ENCODE measurements at regions of chr20 and their contacts with region 1.

Region 1: GRCh38 chr20:34312544-34313217 is 9.5 kb upstream of the AHCY start:
- DNase-seq: peak; percentile 93
- ATAC-seq: peak; percentile 100
- H3K4me3 Mint-ChIP-seq: peak overlapping the region; percentile 22
- H3K27ac Mint-ChIP-seq: no peak overlapping the region
- H3K4me1 Mint-ChIP-seq: peaks cover 21% of the 10 kb centered on the region
- H3K27me3 Mint-ChIP-seq: peaks cover 24% of the 10 kb centered on the region

Region 2: GRCh38 chr20:34089655-34090345 is 222.9 kb before region 1 on chr20:
- CTCF ChIA-PET with region 1: no interaction called
- POLR2A ChIA-PET with region 1: no interaction called
- DNase-seq: no peak
- ATAC-seq: no peak
- H3K4me3 Mint-ChIP-seq: no peak overlapping the region
- H3K27ac Mint-ChIP-seq: peak overlapping the region; percentile 43
- H3K4me1 Mint-ChIP-seq: peaks cover 1% of the 10 kb centered on the region
- H3K27me3 Mint-ChIP-seq: no peaks in the 10 kb centered on the region

Region 3: DNA sequence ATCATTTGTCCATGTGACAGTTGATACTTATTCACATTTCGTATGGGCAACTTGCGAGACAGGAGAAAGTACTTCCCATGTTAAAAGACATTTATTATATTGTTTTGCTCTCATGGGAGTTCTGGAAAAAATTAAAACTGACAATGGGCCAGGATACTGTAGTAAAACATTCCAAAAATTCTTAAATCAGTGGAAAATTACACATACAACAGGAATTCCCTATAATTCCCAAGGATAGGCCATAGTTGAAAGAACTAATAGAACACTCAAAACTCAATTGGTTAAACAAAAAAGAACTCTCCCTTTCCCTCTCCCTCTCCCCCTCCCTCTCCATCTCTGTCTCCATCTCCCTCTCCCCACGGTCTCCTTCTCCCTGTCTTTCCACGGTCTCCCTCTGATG is 181.2 kb before region 1 on chr20:
- CTCF ChIA-PET with region 1: no interaction called
- POLR2A ChIA-PET with region 1: no interaction called
- DNase-seq: no peak
- ATAC-seq: no peak
- H3K4me3 Mint-ChIP-seq: no peak overlapping the region
- H3K27ac Mint-ChIP-seq: no peak overlapping the region
- H3K4me1 Mint-ChIP-seq: peaks cover 3% of the 10 kb centered on the region
- H3K27me3 Mint-ChIP-seq: peaks cover 14% of the 10 kb centered on the region

Region 4: GRCh38 chr20:34190679-34191090 is 122.0 kb before region 1 on chr20:
- CTCF ChIA-PET with region 1: interaction called, 17 read pairs
- POLR2A ChIA-PET with region 1: no interaction called
- DNase-seq: peak; percentile 47
- ATAC-seq: peak; percentile 68
- H3K4me3 Mint-ChIP-seq: no peak overlapping the region
- H3K27ac Mint-ChIP-seq: no peak overlapping the region
- H3K4me1 Mint-ChIP-seq: peaks cover 12% of the 10 kb centered on the region
- H3K27me3 Mint-ChIP-seq: peaks cover 32% of the 10 kb centered on the region

Region 5: DNA sequence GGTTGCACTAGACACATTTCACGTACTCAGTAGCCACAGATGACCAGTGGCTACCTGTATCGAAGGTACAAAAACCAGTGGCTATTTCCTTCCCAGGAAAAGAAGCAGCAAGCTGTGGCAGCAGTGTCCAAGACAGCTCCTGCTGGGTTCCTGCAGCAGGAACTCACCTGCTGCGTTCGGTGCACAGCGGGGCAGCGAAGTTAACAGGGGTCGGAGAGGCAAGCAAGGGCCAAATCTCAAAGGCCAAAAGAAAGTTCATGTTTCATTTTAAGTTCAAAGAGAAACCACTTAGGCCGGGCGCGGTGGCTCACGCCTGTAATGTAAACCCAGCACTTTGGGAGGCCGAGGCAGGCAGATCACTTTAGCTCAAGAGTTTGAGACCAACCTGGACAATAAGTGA is 44.5 kb before region 1 on chr20:
- CTCF ChIA-PET with region 1: no interaction called
- POLR2A ChIA-PET with region 1: no interaction called
- DNase-seq: no peak
- ATAC-seq: no peak
- H3K4me3 Mint-ChIP-seq: no peak overlapping the region
- H3K27ac Mint-ChIP-seq: no peak overlapping the region
- H3K4me1 Mint-ChIP-seq: peaks cover 5% of the 10 kb centered on the region
- H3K27me3 Mint-ChIP-seq: no peaks in the 10 kb centered on the region

Region 6: GRCh38 chr20:34363062-34363464 is 50.4 kb after region 1 on chr20 and contains the start of gene ITCH:
- CTCF ChIA-PET with region 1: interaction called, 32 read pairs
- POLR2A ChIA-PET with region 1: interaction called, 3 read pairs
- DNase-seq: peak; percentile 95
- ATAC-seq: peak; percentile 98
- H3K4me3 Mint-ChIP-seq: peak within 1 kb of the TSS; percentile 93
- H3K27ac Mint-ChIP-seq: peak within 1 kb of the TSS; percentile 96
- H3K4me1 Mint-ChIP-seq: peaks cover 46% of the 10 kb centered on the region
- H3K27me3 Mint-ChIP-seq: no peaks in the 10 kb centered on the region
- total RNA-seq, gene ITCH: 52.1 to 59.9 TPM

Region 7: DNA sequence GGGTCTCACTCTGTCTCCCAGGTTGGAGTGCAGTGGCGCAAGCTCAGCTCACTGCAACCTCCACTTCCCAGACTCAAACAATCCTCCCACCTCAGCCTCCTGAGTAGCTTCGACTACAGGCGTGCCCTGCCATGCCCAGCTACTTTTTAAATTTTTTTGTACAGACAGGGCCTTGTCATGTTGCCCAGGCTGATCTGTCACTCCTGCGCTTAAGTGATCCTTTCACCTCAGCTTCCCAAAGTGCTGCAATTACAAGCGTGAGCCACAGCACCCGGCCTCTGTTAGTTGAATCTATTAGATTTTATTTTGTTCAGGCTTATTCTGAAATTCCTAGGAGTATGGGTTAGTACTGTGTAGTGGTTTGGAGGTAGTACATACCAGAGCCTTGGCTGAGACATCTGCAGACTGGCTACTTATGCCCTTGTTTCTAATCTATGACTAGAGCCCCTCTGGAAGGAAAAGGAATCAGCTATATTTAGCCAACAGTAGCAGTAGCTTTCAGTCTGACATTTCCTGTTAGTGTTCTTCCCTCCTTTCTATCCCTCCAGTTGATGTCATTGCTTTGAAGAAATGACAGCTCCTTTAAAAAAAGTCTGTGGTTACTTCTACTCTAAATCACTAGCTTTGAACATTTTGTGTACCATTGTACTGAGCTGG is 124.8 kb after region 1 on chr20:
- CTCF ChIA-PET with region 1: interaction called, 51 read pairs
- POLR2A ChIA-PET with region 1: no interaction called
- DNase-seq: no peak
- ATAC-seq: no peak
- H3K4me3 Mint-ChIP-seq: no peak overlapping the region
- H3K27ac Mint-ChIP-seq: peak overlapping the region; percentile 54
- H3K4me1 Mint-ChIP-seq: peaks cover 19% of the 10 kb centered on the region
- H3K27me3 Mint-ChIP-seq: no peaks in the 10 kb centered on the region

Region 8: DNA sequence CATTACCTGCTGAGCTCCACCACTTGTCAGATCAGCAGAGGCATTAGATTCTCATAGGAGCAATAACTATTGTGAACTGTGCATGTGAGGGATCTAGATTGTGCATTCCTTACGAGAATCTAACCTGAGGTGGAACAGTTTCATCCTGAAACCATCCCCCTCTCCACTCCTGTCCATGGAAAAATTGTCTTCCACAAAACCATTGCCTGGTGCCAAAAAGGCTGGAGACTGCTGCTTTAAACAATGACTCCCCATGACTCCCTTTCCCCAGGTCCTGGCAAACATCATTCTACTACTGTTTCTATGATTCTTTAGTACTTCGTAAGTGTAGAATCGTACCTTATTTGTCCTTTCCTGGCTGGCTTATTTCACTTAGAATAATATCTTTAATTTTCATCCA is 193.8 kb after region 1 on chr20:
- CTCF ChIA-PET with region 1: interaction called, 15 read pairs
- POLR2A ChIA-PET with region 1: no interaction called
- DNase-seq: no peak
- ATAC-seq: no peak
- H3K4me3 Mint-ChIP-seq: no peak overlapping the region
- H3K27ac Mint-ChIP-seq: no peak overlapping the region
- H3K4me1 Mint-ChIP-seq: peaks cover 2% of the 10 kb centered on the region
- H3K27me3 Mint-ChIP-seq: no peaks in the 10 kb centered on the region

Region 9: DNA sequence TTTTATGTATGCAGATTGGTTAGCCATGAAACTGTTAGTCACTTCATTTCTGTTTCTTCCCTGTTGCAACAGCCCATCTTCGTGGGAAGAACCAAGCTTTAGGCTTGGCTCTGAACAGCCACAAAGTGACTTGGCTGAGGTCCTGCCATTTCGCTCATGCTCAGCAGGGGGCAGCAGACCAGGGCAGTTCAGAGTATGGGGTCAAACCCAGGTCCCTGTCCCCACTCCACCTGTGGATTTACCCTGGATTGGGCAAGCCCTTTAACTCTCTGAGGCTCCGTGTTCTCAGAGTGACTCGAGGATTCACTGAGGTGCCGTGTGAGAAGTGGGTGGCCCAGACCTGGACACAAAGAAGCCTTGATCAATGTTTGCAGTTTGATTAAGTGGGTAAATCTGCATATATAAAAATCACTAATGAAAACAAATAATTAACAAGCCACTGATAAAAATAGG is 226.0 kb after region 1 on chr20:
- CTCF ChIA-PET with region 1: interaction called, 19 read pairs
- POLR2A ChIA-PET with region 1: no interaction called
- DNase-seq: peak; percentile 66
- ATAC-seq: peak; percentile 66
- H3K4me3 Mint-ChIP-seq: no peak overlapping the region
- H3K27ac Mint-ChIP-seq: no peak overlapping the region
- H3K4me1 Mint-ChIP-seq: peaks cover 2% of the 10 kb centered on the region
- H3K27me3 Mint-ChIP-seq: no peaks in the 10 kb centered on the region

Region 10: GRCh38 chr20:34768096-34768495 is 455.4 kb after region 1 on chr20:
- CTCF ChIA-PET with region 1: interaction called, 87 read pairs
- POLR2A ChIA-PET with region 1: no interaction called
- DNase-seq: no peak
- ATAC-seq: no peak
- H3K4me3 Mint-ChIP-seq: no peak overlapping the region
- H3K27ac Mint-ChIP-seq: no peak overlapping the region
- H3K4me1 Mint-ChIP-seq: no peaks in the 10 kb centered on the region
- H3K27me3 Mint-ChIP-seq: no peaks in the 10 kb centered on the region

Measured in activated CD8-positive, alpha-beta T cell treated with anti-CD3 and anti-CD28 coated beads, Interleukin-2, amount 10 ng/mL, durations not matched to agents 7 days and 5 days (primary cell).